ENCODE measurements at regions of chr5 and their contacts with region 1.

Region 1: GRCh38 chr5:76489877-76490688 is 87.0 kb downstream of the IQGAP2 start:
- DNase-seq: no peak
- H3K4me3 Mint-ChIP-seq: no peak overlapping the region
- H3K27ac Mint-ChIP-seq: no peak overlapping the region
- H3K4me1 Mint-ChIP-seq: peaks cover 15% of the 10 kb centered on the region
- H3K27me3 Mint-ChIP-seq: no peaks in the 10 kb centered on the region

Region 2: DNA sequence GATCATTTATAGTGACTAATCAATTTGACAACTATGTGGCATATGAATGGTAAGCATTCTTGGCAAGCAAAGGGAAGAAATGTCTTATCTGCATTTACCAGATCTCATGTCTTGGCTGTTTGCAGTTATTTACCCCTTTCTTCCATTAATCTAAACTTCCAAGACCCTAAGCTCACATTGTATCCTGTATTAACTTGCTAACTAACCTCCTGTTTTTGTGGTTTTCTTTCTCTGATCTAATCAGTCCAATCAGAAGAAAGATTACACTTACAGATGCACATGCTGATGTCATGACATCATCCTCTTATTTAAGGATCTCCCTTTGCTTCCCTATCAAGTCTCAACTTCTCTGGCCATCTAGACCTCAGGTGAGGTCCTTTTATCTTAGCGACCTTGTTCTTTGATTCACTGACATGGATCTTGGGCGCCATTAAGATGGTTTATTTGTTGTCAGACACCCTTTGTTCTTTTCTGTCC is 37.6 kb after region 1 on chr5:
- intact Hi-C with region 1: loop called (anchors 5 kb)
- DNase-seq: no peak
- H3K4me3 Mint-ChIP-seq: no peak overlapping the region
- H3K27ac Mint-ChIP-seq: no peak overlapping the region
- H3K4me1 Mint-ChIP-seq: peaks cover 51% of the 10 kb centered on the region
- H3K27me3 Mint-ChIP-seq: no peaks in the 10 kb centered on the region

Measured in activated CD4-positive, alpha-beta T cell treated with anti-CD3 and anti-CD28 coated beads, Interleukin-2, amount 10 ng/mL, durations not matched to agents 24 days and 14 days (primary cell).